Activated T-helper 1 cell treated with anti-CD3 and anti-CD28 coated beads, Interleukin-12 subunit alpha, Interleukin-12 subunit beta, Interleukin-2, Interleukin-4 antibody, amounts not matched to agents 30 ng/mL and 10 ng/mL and 1 ng/mL, durations not matched to agents 14 hours and 24 hours and 36 hours (primary cell): ENCODE measurements at regions of chr9 and their contacts with region 1.

Region 1: DNA sequence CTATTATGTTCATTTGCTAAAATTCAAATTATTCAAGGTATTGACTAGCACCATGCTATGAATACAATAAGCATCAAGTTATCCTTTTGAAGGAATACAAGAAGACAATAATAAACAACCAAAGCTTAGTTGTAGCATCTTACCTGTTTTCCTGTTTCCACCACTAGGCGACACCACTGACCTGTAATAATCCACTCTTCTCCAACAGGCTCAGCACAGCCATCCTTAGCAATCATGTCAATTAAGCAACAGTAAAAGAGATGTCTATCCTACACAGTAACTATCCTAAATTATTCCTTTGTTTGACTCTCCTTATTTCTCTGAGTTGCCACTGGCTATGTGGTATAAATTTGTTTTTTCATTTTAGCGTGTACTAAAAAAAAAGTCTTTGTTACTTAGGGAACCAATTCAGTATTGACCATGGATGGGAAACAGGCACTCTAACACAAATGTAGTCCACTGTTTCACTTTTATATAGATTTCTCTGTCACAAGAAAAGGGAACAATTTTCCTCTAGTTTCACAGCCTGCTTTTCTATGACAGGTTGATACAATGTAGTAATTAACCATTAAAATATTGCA is 46.2 kb downstream of the PCA3 start:
- DNase-seq: no peak
- H3K4me3 Mint-ChIP-seq: no peak overlapping the region
- H3K27ac Mint-ChIP-seq: no peak overlapping the region
- H3K4me1 Mint-ChIP-seq: no peaks in the 10 kb centered on the region
- H3K27me3 Mint-ChIP-seq: no peaks in the 10 kb centered on the region

Region 2: DNA sequence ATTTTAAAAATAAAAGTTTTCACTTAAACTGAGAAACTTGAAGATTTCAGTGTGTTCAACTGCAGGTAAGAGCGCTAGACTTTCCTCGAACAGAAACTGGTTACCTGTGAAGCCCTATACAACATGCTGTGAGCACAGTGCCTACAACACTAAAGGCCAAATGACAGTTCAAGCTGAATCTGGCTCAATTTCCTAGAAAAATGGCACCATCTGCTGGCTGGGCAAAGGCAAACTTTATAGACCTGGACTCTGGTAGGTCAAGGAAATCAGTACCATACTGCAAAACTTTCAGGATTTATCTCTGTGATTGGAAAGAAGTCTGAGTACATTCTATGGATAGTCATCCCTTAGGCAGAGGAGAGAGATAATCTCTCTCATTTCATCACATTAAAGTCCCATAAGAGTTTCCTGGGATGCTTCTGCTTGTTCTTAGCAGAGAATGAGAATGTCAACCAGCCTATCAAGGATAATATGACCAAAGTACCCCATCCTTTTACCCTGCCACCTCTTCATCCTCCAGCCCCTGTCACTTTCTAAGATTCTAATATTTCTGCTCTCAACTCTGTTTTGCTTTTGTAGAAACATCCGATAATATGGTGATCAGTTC is 177.2 kb after region 1 on chr9:
- intact Hi-C with region 1: loop called (anchors 1 kb)
- DNase-seq: no peak
- H3K4me3 Mint-ChIP-seq: no peak overlapping the region
- H3K27ac Mint-ChIP-seq: no peak overlapping the region
- H3K4me1 Mint-ChIP-seq: no peaks in the 10 kb centered on the region
- H3K27me3 Mint-ChIP-seq: peaks cover 3% of the 10 kb centered on the region

Region 3: GRCh38 chr9:77011973-77012821 is 201.7 kb after region 1 on chr9:
- intact Hi-C with region 1: loop called (anchors 1 kb)
- DNase-seq: peak; percentile 44
- H3K4me3 Mint-ChIP-seq: no peak overlapping the region
- H3K27ac Mint-ChIP-seq: no peak overlapping the region
- H3K4me1 Mint-ChIP-seq: peaks cover 10% of the 10 kb centered on the region
- H3K27me3 Mint-ChIP-seq: peaks cover 64% of the 10 kb centered on the region